Activated naive CD4-positive, alpha-beta T cell treated with anti-CD3 and anti-CD28 coated beads for 36 hours (primary cell): ENCODE measurements at regions of chr17 and their contacts with region 1.

Region 1: DNA sequence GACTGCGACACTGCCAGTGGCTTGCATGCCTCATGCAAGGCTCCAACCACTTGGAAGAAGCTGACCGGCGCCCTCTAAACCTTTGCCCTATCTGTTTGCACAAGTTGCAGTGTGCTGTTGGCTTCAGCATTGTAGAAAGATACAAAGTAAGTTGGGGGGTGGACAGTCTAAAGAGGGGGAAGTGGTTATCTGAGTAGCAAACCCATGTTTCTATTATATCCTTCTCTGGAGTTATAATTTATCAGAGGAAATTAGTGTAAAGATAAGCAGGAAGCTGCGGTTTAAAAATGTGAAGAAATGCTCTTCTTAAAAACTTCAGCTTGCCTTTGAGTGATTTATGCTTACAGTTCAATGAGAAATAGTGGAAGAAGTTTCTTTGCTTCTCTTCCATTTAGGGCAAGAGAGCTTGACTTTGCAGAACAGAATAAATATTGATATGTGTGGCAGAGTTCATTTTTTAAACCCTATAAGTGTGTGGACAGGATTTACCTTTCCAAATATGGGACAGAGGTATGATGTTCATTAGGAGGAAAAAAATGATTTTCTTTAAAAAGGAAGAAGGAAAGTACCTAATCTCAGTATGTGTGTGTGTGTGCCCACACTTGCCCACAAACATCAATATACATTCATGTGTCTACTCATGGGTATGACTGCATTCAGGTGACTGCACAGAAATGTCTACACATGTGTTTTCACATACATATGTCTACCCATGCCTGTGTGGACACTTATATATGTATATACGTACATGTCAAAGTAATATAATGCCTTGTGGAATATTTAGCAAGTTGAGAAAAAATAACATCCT is 8.1 kb downstream of the AMZ2 start:
- DNase-seq: peak; percentile 54
- H3K4me3 Mint-ChIP-seq: no peak overlapping the region
- H3K27ac Mint-ChIP-seq: peak overlapping the region; percentile 92
- H3K4me1 Mint-ChIP-seq: peaks cover 76% of the 10 kb centered on the region
- H3K27me3 Mint-ChIP-seq: no peaks in the 10 kb centered on the region

Region 2: GRCh38 chr17:68172461-68172954 is 83.4 kb before region 1 on chr17:
- CTCF ChIA-PET with region 1: no interaction called
- intact Hi-C with region 1: loop called (anchors 1 kb)
- DNase-seq: peak; percentile 86
- H3K4me3 Mint-ChIP-seq: no peak overlapping the region
- H3K27ac Mint-ChIP-seq: no peak overlapping the region
- H3K4me1 Mint-ChIP-seq: peaks cover 15% of the 10 kb centered on the region
- H3K27me3 Mint-ChIP-seq: no peaks in the 10 kb centered on the region

Region 3: GRCh38 chr17:68238164-68238872 is 17.6 kb before region 1 on chr17:
- CTCF ChIA-PET with region 1: interaction called, 5 read pairs
- intact Hi-C with region 1: loop called (anchors 1 kb)
- DNase-seq: no peak
- H3K4me3 Mint-ChIP-seq: peak overlapping the region; percentile 74
- H3K27ac Mint-ChIP-seq: peak overlapping the region; percentile 94
- H3K4me1 Mint-ChIP-seq: peaks cover 54% of the 10 kb centered on the region
- H3K27me3 Mint-ChIP-seq: no peaks in the 10 kb centered on the region

Region 4: GRCh38 chr17:68356520-68356919 is 100.6 kb after region 1 on chr17:
- CTCF ChIA-PET with region 1: no interaction called
- intact Hi-C with region 1: loop called (anchors 1 kb)
- DNase-seq: peak; percentile 85
- H3K4me3 Mint-ChIP-seq: no peak overlapping the region
- H3K27ac Mint-ChIP-seq: peak overlapping the region; percentile 46
- H3K4me1 Mint-ChIP-seq: peaks cover 49% of the 10 kb centered on the region
- H3K27me3 Mint-ChIP-seq: no peaks in the 10 kb centered on the region

Region 5: GRCh38 chr17:68613739-68614298 is 357.9 kb after region 1 on chr17:
- CTCF ChIA-PET with region 1: no interaction called
- intact Hi-C with region 1: loop called (anchors 10 kb)
- DNase-seq: peak; percentile 47
- H3K4me3 Mint-ChIP-seq: no peak overlapping the region
- H3K27ac Mint-ChIP-seq: no peak overlapping the region
- H3K4me1 Mint-ChIP-seq: no peaks in the 10 kb centered on the region
- H3K27me3 Mint-ChIP-seq: peaks cover 19% of the 10 kb centered on the region

Region 6: GRCh38 chr17:68759343-68760132 is 503.6 kb after region 1 on chr17:
- CTCF ChIA-PET with region 1: no interaction called
- intact Hi-C with region 1: loop called (anchors 5 kb)
- DNase-seq: peak; percentile 85
- H3K4me3 Mint-ChIP-seq: peak overlapping the region; percentile 47
- H3K27ac Mint-ChIP-seq: no peak overlapping the region
- H3K4me1 Mint-ChIP-seq: peaks cover 11% of the 10 kb centered on the region
- H3K27me3 Mint-ChIP-seq: peaks cover 2% of the 10 kb centered on the region